Upper lobe of right lung (tissue), 1 donor: ENCODE measurements at regions of chr5 and their contacts with region 1.

Region 1: GRCh38 chr5:80204808-80205614 is 50.8 kb downstream of the SERINC5 start:
- DNase-seq: no peak
- ATAC-seq: peak; percentile 69
- H3K4me3 ChIP-seq: no peak overlapping the region
- H3K27ac ChIP-seq: no peak overlapping the region
- H3K4me1 ChIP-seq: peaks cover 19% of the 10 kb centered on the region
- H3K27me3 ChIP-seq: no peaks in the 10 kb centered on the region
- CTCF ChIP-seq: no peak

Region 2: GRCh38 chr5:80055491-80056170 is 149.4 kb before region 1 on chr5:
- intact Hi-C with region 1: no loop called
- DNase-seq: no peak
- ATAC-seq: peak; percentile 74
- H3K4me3 ChIP-seq: no peak overlapping the region
- H3K27ac ChIP-seq: no peak overlapping the region
- H3K4me1 ChIP-seq: no peaks in the 10 kb centered on the region
- H3K27me3 ChIP-seq: no peaks in the 10 kb centered on the region
- CTCF ChIP-seq: no peak

Region 3: GRCh38 chr5:80101993-80102392 is 103.0 kb before region 1 on chr5:
- intact Hi-C with region 1: no loop called
- DNase-seq: no peak
- ATAC-seq: no peak
- H3K4me3 ChIP-seq: no peak overlapping the region
- H3K27ac ChIP-seq: no peak overlapping the region
- H3K4me1 ChIP-seq: no peaks in the 10 kb centered on the region
- H3K27me3 ChIP-seq: no peaks in the 10 kb centered on the region
- CTCF ChIP-seq: no peak

Region 4: DNA sequence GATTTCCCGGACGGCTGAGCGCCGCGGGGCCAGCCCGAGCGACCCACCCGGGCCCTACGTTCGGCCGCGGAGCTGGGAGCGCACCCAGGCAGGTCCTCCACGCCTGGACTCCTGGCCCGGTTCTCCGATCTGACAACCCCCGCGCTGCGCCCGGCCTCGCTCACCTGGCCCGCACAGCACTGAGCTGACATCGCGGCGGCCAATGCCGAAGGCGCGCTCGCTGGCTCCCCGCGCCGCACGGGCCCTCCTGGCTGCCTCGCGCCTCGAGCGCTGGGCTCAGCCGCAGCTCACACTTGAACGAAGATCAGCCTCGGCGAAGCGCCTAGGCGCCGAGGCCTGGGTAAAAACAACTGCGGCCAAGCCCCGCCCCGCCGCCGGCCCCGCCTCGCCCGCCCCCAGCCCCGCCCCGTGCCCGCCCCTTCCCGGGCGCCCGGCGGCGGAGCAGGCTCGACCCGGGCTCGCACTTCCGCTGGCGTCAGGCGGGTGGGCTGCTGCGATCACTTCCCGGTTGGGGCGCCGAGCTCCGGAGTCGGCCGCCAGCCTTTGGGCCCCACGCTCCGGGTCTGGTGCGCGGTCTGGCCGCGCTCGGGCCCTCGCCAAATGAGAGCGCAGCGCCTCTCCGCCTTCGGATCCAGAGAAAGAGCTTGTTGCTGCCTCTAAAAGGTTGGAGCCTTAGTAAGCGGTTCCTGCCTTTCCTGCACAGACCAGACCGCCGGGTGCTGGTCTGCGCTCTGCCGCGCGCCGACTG is 50.9 kb after region 1 on chr5 and contains the start of gene SERINC5:
- intact Hi-C with region 1: loop called (anchors 10 kb)
- DNase-seq: peak; percentile 95
- ATAC-seq: peak; percentile 93
- H3K4me3 ChIP-seq: peak within 1 kb of the TSS; percentile 76
- H3K27ac ChIP-seq: peak within 1 kb of the TSS; percentile 98
- H3K4me1 ChIP-seq: peaks cover 36% of the 10 kb centered on the region
- H3K27me3 ChIP-seq: no peaks in the 10 kb centered on the region
- CTCF ChIP-seq: no peak
- total RNA-seq, gene SERINC5: 60.4 TPM